Colonic mucosa (tissue), 4 donors: ENCODE measurements at regions of chr14 and their contacts with region 1.

Region 1: GRCh38 chr14:102096214-102097114 is 9.6 kb upstream of the HSP90AA1 start:
- DNase-seq: peak; percentile 92
- H3K4me3 ChIP-seq: no peak overlapping the region
- H3K27ac ChIP-seq: no peak overlapping the region
- H3K4me1 ChIP-seq: peaks cover 4% of the 10 kb centered on the region
- H3K27me3 ChIP-seq: no peaks in the 10 kb centered on the region
- CTCF ChIP-seq: peak; percentile 78

Region 2: DNA sequence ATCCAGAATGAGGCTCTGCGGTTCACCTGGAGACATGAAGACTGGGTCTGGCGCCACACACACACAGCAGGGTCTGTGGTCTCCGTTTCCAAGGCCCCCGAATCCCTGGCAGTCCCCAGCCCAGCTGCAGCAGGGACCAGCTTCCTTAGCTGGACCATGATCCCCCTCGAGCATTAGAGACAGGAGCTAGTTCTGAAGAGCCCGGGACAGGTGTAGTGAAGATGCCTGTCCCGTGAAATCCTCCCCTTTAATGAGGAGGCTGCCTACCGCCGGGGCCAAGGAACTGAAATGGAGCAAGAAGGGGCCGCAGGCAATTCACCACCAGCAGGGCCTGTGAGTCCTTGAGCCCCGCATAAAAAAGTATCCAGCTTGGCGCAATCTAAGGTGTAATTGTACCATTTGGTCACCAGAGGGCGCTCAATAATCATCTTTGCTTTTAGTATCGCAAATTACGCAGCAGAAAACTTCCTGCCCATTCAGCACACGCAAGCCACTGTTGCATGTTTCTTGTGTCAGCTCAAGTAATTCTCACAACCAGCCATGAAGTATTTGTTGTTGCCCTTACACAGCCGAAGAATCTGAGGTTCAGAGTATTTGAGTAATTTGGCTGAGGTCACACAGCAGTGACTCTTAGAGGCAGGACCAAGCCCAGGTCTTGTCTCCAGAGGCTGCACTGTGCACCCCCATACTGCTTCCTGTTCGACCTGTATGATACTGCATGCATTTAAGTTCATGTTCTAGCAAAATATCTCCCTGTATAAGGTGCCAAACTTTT is 389.2 kb before region 1 on chr14:
- intact Hi-C with region 1: loop called (anchors 5 kb)
- DNase-seq: peak; percentile 68
- H3K4me3 ChIP-seq: no peak overlapping the region
- H3K27ac ChIP-seq: no peak overlapping the region
- H3K4me1 ChIP-seq: peaks cover 14% of the 10 kb centered on the region
- H3K27me3 ChIP-seq: no peaks in the 10 kb centered on the region
- CTCF ChIP-seq: peak; percentile 85

Region 3: DNA sequence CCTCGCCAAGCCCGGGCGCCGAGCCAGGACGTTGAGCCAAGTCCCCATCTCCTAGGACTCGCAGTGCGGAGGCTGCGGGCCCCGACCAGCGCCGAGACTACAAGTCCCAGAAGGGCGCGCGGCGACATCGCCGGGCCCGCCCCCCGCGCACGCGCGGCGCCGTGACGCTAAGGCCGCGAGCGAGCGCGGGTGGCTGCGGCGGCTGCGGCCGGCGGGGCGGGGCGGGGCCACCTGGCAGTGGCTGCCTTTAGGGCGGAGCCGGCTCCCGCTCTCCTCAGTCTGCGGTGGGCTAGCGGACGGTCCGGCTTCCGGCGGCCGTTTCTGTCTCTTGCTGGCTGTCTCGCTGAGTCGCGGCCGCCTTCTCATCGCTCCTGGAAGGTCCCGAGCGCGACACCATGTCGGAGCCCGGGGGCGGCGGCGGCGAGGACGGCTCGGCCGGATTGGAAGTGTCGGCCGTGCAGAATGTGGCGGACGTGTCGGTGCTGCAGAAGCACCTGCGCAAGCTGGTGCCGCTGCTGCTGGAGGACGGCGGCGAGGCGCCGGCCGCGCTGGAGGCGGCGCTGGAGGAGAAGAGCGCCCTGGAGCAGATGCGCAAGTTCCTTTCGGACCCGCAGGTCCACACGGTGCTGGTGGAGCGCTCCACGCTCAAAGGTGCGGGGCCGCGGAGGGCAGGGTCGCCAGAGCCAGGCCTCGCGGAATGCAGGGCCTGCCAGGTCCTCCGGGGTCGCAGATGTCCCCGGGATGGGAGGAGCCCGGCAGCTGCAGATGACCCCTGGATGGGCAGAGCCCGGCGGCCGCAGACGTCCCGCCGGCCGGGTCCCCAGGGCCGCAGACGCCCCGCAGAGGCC is 131.9 kb before region 1 on chr14 and contains the start of gene DYNC1H1:
- intact Hi-C with region 1: loop called (anchors 5 kb)
- DNase-seq: peak; percentile 90
- H3K4me3 ChIP-seq: peak within 1 kb of the TSS; percentile 83
- H3K27ac ChIP-seq: peak within 1 kb of the TSS; percentile 85
- H3K4me1 ChIP-seq: peaks cover 4% of the 10 kb centered on the region
- H3K27me3 ChIP-seq: no peaks in the 10 kb centered on the region
- CTCF ChIP-seq: no peak
- total RNA-seq, gene DYNC1H1: 345 to 359 TPM

Region 4: DNA sequence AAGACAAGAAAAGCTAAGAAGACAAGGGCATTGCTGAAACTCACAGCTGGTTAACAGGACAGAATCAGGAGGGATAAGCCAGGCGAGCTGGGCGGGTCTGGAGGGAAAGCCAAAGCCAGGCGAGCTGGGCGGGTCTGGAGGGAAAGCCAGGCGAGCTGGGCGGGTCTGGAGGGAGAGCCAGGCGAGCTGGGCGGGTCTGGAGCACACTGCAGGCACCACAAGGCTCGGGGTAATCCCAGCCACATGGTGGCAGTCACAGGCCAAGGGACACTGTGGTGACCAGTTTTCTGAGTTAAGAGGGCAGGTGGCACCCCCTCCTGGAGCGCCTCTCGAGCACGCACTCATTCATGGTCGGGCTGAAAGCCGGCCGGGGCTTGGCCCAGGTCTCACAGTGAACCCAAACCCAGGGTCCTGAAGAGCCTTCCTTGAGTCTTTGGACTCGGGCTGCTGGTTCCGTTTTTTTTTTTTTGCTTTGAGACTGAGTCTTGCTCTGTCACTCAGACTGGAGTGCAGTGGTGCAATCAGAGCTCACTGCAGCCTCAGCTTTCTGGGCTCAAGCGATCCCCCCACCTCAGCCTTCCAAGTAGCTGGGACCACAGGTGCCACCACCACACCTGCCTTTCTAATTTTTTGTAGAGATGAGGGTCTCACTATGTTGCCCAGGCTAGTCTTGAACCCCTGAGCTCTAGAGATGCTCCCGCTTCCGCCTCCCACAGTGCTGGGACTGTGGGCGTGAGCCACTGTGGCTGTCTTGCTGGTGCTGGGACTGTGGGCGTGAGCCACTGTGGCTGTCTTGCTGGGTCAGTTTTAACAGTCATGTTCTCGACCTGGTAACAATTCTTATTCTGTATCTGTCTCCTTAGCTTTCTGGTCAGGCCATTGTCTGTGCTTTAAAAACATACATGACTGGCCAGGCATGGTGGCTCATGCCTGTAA is 49.9 kb before region 1 on chr14:
- intact Hi-C with region 1: loop called (anchors 2 kb)
- DNase-seq: peak; percentile 88
- H3K4me3 ChIP-seq: no peak overlapping the region
- H3K27ac ChIP-seq: no peak overlapping the region
- H3K4me1 ChIP-seq: no peaks in the 10 kb centered on the region
- H3K27me3 ChIP-seq: no peaks in the 10 kb centered on the region
- CTCF ChIP-seq: peak; percentile 50